ENCODE measurements at regions of chr6 and their contacts with region 1.

Region 1: GRCh38 chr6:106444777-106445507 is 84.4 kb downstream of the CRYBG1 start:
- DNase-seq: peak in 1 of 2 experiments; percentile 65
- H3K4me3 ChIP-seq: no peak overlapping the region
- H3K4me3 Mint-ChIP-seq: no peak overlapping the region
- H3K27ac Mint-ChIP-seq: no peak overlapping the region
- H3K4me1 ChIP-seq: peaks cover 8% of the 10 kb centered on the region
- H3K4me1 Mint-ChIP-seq: peaks cover 6% of the 10 kb centered on the region
- H3K27me3 ChIP-seq: no peaks in the 10 kb centered on the region; the same call in none of the 2 replicates
- H3K27me3 Mint-ChIP-seq: peaks cover 14% of the 10 kb centered on the region
- CTCF ChIP-seq: peak; percentile 64 to 65

Region 2: GRCh38 chr6:105431226-105431625 is 1013.7 kb before region 1 on chr6:
- CTCF ChIA-PET with region 1: no interaction called
- POLR2A ChIA-PET with region 1: no interaction called
- intact Hi-C with region 1: loop called (anchors 5 kb)
- DNase-seq: peak in 1 of 2 experiments; percentile 46
- H3K4me3 ChIP-seq: no peak overlapping the region
- H3K4me3 Mint-ChIP-seq: no peak overlapping the region
- H3K27ac Mint-ChIP-seq: no peak overlapping the region
- H3K4me1 ChIP-seq: peaks cover 28% of the 10 kb centered on the region
- H3K4me1 Mint-ChIP-seq: peaks cover 19% of the 10 kb centered on the region
- H3K27me3 ChIP-seq: no peaks in the 10 kb centered on the region
- H3K27me3 Mint-ChIP-seq: no peaks in the 10 kb centered on the region
- CTCF ChIP-seq: peak; percentile 45 to 73

Region 3: GRCh38 chr6:105941621-105942412 is 503.1 kb before region 1 on chr6:
- CTCF ChIA-PET with region 1: no interaction called
- POLR2A ChIA-PET with region 1: no interaction called
- intact Hi-C with region 1: no loop called
- DNase-seq: no peak
- H3K4me3 ChIP-seq: no peak overlapping the region
- H3K4me3 Mint-ChIP-seq: no peak overlapping the region
- H3K27ac Mint-ChIP-seq: no peak overlapping the region
- H3K4me1 ChIP-seq: peaks cover 11% of the 10 kb centered on the region; the same call in 1 of the 2 replicates
- H3K4me1 Mint-ChIP-seq: peaks cover 16% of the 10 kb centered on the region
- H3K27me3 ChIP-seq: no peaks in the 10 kb centered on the region
- H3K27me3 Mint-ChIP-seq: no peaks in the 10 kb centered on the region
- CTCF ChIP-seq: no peak

Region 4: GRCh38 chr6:106339334-106340029 is 105.5 kb before region 1 on chr6:
- CTCF ChIA-PET with region 1: interaction called, 4 read pairs
- POLR2A ChIA-PET with region 1: interaction called, 5 read pairs
- intact Hi-C with region 1: loop called (anchors 1 kb)
- DNase-seq: peak; percentile 56 to 66
- H3K4me3 ChIP-seq: no peak overlapping the region
- H3K4me3 Mint-ChIP-seq: no peak overlapping the region
- H3K27ac Mint-ChIP-seq: no peak overlapping the region
- H3K4me1 ChIP-seq: no peaks in the 10 kb centered on the region
- H3K4me1 Mint-ChIP-seq: peaks cover 6% of the 10 kb centered on the region
- H3K27me3 ChIP-seq: no peaks in the 10 kb centered on the region
- H3K27me3 Mint-ChIP-seq: peaks cover 6% of the 10 kb centered on the region
- CTCF ChIP-seq: peak; percentile 75 to 84

Region 5: DNA sequence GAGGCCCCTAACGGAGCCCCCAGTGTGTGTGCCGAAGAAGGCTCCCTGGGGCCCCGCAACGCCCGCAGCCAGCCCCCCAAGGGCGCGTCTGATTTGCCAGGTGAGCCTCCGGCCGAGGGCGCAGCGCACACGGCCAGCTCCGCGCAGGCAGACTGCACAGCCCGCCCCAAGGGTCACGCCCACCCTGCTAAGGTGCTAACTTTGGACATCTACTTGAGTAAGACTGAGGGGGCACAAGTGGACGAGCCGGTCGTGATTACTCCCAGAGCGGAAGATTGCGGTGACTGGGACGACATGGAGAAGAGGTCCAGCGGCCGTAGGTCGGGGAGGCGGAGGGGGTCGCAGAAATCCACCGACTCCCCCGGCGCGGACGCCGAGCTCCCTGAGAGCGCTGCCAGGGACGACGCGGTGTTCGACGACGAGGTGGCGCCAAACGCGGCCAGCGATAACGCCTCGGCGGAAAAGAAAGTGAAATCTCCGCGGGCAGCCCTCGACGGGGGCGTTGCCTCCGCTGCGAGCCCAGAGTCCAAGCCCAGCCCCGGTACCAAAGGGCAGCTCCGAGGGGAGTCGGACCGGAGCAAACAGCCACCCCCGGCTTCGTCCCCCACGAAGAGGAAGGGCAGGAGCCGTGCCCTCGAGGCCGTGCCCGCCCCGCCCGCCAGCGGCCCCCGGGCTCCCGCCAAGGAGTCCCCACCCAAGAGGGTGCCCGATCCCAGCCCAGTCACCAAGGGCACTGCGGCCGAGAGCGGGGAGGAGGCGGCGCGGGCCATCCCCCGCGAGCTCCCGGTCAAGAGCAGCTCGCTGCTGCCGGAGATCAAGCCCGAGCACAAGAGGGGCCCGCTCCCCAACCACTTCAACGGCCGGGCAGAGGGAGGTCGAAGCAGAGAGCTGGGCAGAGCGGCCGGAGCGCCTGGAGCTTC is 67.4 kb after region 1 on chr6:
- CTCF ChIA-PET with region 1: interaction called, 3 read pairs
- POLR2A ChIA-PET with region 1: no interaction called
- intact Hi-C with region 1: loop called (anchors 2 kb)
- DNase-seq: peak; percentile 53 to 68
- H3K4me3 ChIP-seq: peak overlapping the region; percentile 78
- H3K4me3 Mint-ChIP-seq: peak overlapping the region; percentile 91
- H3K27ac Mint-ChIP-seq: peak overlapping the region; percentile 66
- H3K4me1 ChIP-seq: peaks cover 6% of the 10 kb centered on the region; the same call in 1 of the 2 replicates
- H3K4me1 Mint-ChIP-seq: peaks cover 12% of the 10 kb centered on the region
- H3K27me3 ChIP-seq: no peaks in the 10 kb centered on the region; the same call in none of the 2 replicates
- H3K27me3 Mint-ChIP-seq: peaks cover 5% of the 10 kb centered on the region
- CTCF ChIP-seq: peak in 1 of 2 experiments; percentile 42

Region 6: GRCh38 chr6:106556368-106556960 is 111.5 kb after region 1 on chr6:
- CTCF ChIA-PET with region 1: interaction called, 3 read pairs
- POLR2A ChIA-PET with region 1: no interaction called
- intact Hi-C with region 1: loop called (anchors 2 kb)
- DNase-seq: peak in 1 of 2 experiments; percentile 13
- H3K4me3 ChIP-seq: no peak overlapping the region
- H3K4me3 Mint-ChIP-seq: no peak overlapping the region
- H3K27ac Mint-ChIP-seq: no peak overlapping the region
- H3K4me1 ChIP-seq: no peaks in the 10 kb centered on the region
- H3K4me1 Mint-ChIP-seq: no peaks in the 10 kb centered on the region
- H3K27me3 ChIP-seq: no peaks in the 10 kb centered on the region
- H3K27me3 Mint-ChIP-seq: no peaks in the 10 kb centered on the region
- CTCF ChIP-seq: peak; percentile 25 to 38

Region 7: DNA sequence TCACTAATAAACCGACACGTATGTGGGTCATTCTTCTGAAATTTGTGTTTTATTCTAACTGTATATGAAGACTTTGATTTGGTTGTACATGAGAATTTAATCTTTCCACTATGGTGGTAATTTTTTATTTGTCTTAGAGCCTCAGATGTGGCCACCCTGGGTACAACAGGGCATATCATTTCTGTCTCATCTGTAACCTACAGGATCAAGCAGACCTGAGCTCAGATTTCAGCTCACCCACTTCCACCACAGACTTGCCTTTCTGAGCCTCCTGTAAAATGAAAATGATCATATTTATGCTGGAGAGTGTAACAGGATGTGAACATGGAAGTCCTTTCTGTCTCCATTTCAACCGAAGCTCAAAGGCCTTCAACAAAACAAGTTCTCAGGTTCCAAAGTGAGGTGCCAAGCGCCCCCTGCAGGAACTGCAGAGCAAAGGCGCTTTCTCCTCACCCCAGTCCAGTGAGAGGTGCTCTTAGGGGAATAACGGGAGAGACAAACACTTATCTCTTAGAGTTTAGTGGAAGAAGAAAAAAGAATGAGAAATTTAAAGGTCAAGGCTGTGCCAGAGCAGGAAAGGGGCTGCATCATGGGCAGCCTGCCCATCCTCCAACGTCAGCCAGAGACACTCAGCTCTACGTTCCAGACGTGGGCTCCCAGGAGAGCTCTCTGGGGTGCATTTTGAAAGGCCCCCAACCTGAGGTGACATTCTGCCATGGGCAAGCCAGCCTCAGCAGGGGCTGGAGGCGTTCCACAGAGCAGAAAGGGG is 552.6 kb after region 1 on chr6:
- CTCF ChIA-PET with region 1: no interaction called
- POLR2A ChIA-PET with region 1: no interaction called
- intact Hi-C with region 1: loop called (anchors 1 kb)
- DNase-seq: peak; percentile 52 to 67
- H3K4me3 ChIP-seq: no peak overlapping the region
- H3K4me3 Mint-ChIP-seq: no peak overlapping the region
- H3K27ac Mint-ChIP-seq: no peak overlapping the region
- H3K4me1 ChIP-seq: no peaks in the 10 kb centered on the region
- H3K4me1 Mint-ChIP-seq: peaks cover 9% of the 10 kb centered on the region
- H3K27me3 ChIP-seq: no peaks in the 10 kb centered on the region
- H3K27me3 Mint-ChIP-seq: peaks cover under 1% of the 10 kb centered on the region
- CTCF ChIP-seq: peak; percentile 78 to 82

Measured in Caco-2 (cell line).